Activated CD8-positive, alpha-beta memory T cell treated with anti-CD3 and anti-CD28 coated beads, Interleukin-2, amount 10 ng/mL, durations not matched to agents 7 days and 5 days (primary cell): ENCODE measurements at regions of chr12 and their contacts with region 1.

Region 1: DNA sequence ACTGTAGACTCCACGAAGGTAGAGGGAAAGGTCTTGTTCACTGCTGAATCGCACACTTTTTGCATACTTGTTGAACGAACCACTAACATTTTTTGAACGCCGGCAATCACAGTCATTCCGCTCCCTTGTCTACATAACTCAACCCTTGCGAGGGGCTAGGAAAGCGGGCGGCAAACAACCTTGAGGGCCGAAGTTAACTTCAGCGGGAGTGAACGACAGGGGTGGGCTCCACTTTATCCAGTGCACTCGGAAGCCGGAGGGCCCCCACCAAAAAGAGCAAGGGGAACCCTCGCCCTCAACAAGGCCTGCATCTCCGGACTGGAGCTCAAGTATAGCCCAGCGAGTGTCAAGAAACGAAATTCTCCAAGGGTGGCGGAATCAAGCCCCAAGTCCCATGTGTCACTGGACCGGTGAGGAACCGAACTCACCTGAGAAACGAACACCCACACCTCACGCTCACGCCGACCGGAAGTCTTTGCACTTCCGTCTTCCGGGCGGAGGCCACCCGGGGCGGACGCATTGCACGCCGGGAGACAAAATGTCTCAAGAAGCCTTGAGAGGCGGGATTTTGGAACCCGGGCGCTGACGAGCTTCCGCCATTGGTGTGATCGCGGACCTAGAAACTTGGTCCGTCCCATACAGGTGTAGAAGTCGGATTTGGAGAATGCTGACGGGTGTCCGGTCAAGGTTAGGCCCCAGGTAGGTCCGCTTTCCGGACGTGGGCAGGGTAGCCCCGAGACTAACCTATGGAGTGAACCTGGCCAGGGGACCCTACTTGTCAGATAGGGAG is at the start of gene LLPH:
- DNase-seq: peak; percentile 95
- ATAC-seq: peak; percentile 96
- H3K4me3 Mint-ChIP-seq: peak within 1 kb of the TSS; percentile 85
- H3K27ac Mint-ChIP-seq: peak within 1 kb of the TSS; percentile 98
- H3K4me1 Mint-ChIP-seq: peaks cover 61% of the 10 kb centered on the region
- H3K27me3 Mint-ChIP-seq: no peaks in the 10 kb centered on the region
- total RNA-seq, gene LLPH: 35.3 to 40.3 TPM

Region 2: GRCh38 chr12:65840793-65841670 is 289.4 kb before region 1 on chr12:
- CTCF ChIA-PET with region 1: no interaction called
- DNase-seq: no peak
- ATAC-seq: no peak
- H3K4me3 Mint-ChIP-seq: no peak overlapping the region
- H3K27ac Mint-ChIP-seq: no peak overlapping the region
- H3K4me1 Mint-ChIP-seq: no peaks in the 10 kb centered on the region
- H3K27me3 Mint-ChIP-seq: peaks cover 15% of the 10 kb centered on the region

Region 3: DNA sequence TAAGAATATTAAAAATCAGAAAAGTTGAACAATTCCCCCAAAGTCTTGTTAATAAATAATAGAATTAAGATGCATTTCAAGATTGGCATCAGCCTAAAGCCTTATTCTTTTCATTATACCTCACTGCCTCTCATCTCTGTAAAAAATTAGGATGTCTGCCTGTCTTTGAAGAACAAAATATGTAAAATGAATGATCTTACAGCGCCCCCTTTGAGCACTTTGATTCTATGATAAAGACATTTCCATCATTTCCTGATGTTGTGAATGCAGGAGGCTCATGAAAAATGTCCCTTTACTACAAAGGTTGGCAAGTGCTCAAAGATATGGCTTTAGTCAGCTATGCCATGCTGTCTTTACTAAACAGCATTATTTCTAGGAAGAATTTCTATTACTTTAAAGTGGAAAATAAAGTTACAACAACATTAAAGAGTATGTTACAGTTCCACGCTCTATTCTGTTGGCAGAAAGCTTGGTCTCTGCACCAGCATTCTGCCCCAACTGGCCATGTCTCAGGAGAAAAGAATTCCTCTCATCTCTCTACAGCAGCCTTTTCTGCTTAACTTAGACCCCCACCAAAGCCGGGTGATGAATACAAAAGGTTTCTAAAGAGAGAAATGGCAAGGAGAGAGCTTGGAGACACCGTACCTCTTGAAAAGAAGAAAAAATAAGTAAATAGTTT is 95.0 kb before region 1 on chr12:
- CTCF ChIA-PET with region 1: no interaction called
- DNase-seq: no peak
- ATAC-seq: no peak
- H3K4me3 Mint-ChIP-seq: no peak overlapping the region
- H3K27ac Mint-ChIP-seq: no peak overlapping the region
- H3K4me1 Mint-ChIP-seq: no peaks in the 10 kb centered on the region
- H3K27me3 Mint-ChIP-seq: peaks cover 25% of the 10 kb centered on the region

Region 4: DNA sequence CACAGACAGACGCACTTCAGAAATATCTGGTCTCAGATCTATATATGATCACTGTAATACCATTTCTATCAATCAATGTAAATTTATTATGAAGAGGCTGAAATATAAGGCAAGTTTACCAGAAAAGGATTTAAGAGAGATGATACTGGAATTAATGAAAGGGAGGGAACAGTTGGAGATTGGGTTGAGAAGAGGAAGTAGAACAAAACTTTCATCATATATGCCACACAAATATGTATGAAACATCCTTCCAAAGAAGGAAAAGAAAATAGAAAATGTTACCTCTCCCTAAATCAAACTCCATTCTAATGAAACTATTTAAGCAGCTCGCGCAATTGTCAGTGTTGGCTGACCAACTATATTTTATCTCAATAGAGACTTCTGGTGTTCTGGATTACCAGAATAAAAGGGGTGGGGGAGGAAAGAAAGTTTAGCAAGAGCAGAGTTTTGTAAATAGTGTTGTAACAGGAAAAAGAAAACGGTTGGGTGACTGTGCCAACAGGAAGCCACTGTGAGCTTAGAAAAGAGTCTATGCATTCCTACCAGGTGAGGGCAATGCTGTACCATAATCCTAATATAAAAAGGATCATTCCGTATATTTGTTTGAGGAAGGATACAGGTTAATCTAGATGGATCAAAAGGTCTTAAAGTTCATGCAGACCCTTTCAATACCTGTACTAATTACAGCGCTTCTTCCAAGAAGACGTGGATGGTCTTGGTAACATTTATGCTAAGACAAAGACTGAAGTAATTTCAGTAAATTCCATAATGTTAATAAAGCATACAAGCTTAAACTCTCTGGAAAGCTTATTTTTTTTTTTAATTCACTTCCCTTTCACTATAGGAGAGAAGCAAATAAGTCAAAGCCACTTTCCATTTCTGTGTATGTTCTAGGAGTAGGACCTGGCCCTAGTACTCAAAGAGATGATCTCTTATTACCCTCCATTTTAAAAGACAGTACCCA is 14.6 kb after region 1 on chr12:
- CTCF ChIA-PET with region 1: interaction called, 10 read pairs
- DNase-seq: no peak
- ATAC-seq: peak; percentile 64
- H3K4me3 Mint-ChIP-seq: no peak overlapping the region
- H3K27ac Mint-ChIP-seq: peak overlapping the region; percentile 81
- H3K4me1 Mint-ChIP-seq: peaks cover 15% of the 10 kb centered on the region
- H3K27me3 Mint-ChIP-seq: no peaks in the 10 kb centered on the region

Region 5: GRCh38 chr12:66169221-66170170 is 39.0 kb after region 1 on chr12 and contains the start of gene TMBIM4:
- CTCF ChIA-PET with region 1: interaction called, 10 read pairs
- DNase-seq: peak; percentile 92
- ATAC-seq: peak; percentile 87
- H3K4me3 Mint-ChIP-seq: peak within 1 kb of the TSS; percentile 96
- H3K27ac Mint-ChIP-seq: peak within 1 kb of the TSS; percentile 99
- H3K4me1 Mint-ChIP-seq: peaks cover 38% of the 10 kb centered on the region
- H3K27me3 Mint-ChIP-seq: no peaks in the 10 kb centered on the region
- total RNA-seq, gene TMBIM4: 50.5 to 64.5 TPM

Region 6: GRCh38 chr12:66269757-66270383 is 139.4 kb after region 1 on chr12:
- CTCF ChIA-PET with region 1: no interaction called
- DNase-seq: no peak
- ATAC-seq: no peak
- H3K4me3 Mint-ChIP-seq: no peak overlapping the region
- H3K27ac Mint-ChIP-seq: no peak overlapping the region
- H3K4me1 Mint-ChIP-seq: peaks cover 2% of the 10 kb centered on the region
- H3K27me3 Mint-ChIP-seq: no peaks in the 10 kb centered on the region